Activated CD4-positive, alpha-beta T cell treated with anti-CD3 and anti-CD28 coated beads, Interleukin-2, amount 10 ng/mL, durations not matched to agents 24 days and 14 days (primary cell): ENCODE measurements at regions of chr13 and their contacts with region 1.

Region 1: GRCh38 chr13:48186722-48187121 is 46.3 kb upstream of the ITM2B start:
- DNase-seq: no peak
- H3K4me3 Mint-ChIP-seq: no peak overlapping the region
- H3K27ac Mint-ChIP-seq: no peak overlapping the region
- H3K4me1 Mint-ChIP-seq: peaks cover 27% of the 10 kb centered on the region
- H3K27me3 Mint-ChIP-seq: peaks cover 4% of the 10 kb centered on the region

Region 2: DNA sequence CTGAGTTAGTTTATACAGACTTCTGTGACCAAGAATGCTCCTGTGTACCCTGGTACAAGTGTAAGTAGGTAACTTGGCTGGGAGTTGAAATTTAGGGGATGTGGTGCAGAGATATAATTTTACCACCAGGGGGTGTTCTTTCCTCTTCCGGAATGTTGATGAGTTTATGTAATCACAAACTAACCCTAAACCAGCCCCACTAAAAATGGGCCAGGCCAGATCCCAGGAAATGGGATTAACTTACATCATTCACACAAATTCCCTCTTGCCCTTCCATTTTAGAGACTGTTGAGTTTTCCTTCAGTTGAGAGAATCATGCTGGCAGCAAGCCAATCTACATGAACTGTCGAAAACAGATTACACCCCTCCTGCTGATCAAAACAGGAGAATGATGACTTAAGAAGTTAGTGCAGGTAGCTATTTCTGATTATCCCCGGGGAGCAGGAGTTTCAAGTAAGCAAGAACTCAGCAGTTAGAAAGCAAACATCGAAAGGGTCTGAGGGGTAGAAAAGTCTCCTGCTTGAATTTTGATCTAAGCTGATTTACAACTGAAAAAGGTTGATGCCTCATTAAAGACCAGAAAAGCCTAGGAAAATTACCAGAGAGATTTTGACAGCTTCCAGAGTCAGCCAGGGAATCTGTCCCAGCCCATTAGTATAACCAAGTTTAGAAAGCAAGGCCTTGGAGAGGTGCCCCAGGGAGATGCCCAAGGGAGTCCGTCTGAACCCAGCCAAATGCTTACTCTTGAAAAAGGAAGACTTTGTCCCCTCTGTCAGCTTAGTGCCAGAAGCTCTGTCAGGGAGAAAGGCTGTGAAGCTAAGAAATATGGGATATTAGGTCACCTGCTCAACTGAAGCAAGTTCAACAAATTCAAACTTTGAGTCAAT is 59.5 kb before region 1 on chr13:
- intact Hi-C with region 1: loop called (anchors 2 kb)
- DNase-seq: peak; percentile 81
- H3K4me3 Mint-ChIP-seq: no peak overlapping the region
- H3K27ac Mint-ChIP-seq: no peak overlapping the region
- H3K4me1 Mint-ChIP-seq: peaks cover 18% of the 10 kb centered on the region
- H3K27me3 Mint-ChIP-seq: peaks cover 13% of the 10 kb centered on the region

Region 3: GRCh38 chr13:48155848-48156247 is 30.9 kb before region 1 on chr13:
- intact Hi-C with region 1: loop called (anchors 1 kb)
- DNase-seq: peak; percentile 80
- H3K4me3 Mint-ChIP-seq: peak overlapping the region; percentile 44
- H3K27ac Mint-ChIP-seq: peak overlapping the region; percentile 87
- H3K4me1 Mint-ChIP-seq: peaks cover 59% of the 10 kb centered on the region
- H3K27me3 Mint-ChIP-seq: no peaks in the 10 kb centered on the region

Region 4: DNA sequence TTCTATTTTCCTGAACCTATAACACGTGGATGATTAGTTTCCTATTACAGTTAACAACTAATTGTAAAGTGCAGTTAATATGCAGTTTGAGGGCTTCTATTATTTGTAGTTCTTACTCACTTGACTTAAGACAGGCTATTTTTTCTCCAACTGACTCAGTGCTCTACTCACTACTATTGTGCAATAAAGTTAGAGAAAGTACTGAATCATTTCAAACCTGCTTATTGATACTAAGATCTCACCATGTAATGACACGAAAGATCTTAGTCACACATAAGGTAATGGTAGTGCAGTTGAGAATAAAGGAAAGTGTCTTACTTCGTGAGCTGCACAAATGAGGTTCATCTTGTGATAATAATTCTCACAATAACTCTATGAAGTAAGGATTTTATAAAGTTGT is 23.5 kb after region 1 on chr13:
- intact Hi-C with region 1: loop called (anchors 1 kb)
- DNase-seq: no peak
- H3K4me3 Mint-ChIP-seq: no peak overlapping the region
- H3K27ac Mint-ChIP-seq: no peak overlapping the region
- H3K4me1 Mint-ChIP-seq: peaks cover 7% of the 10 kb centered on the region
- H3K27me3 Mint-ChIP-seq: peaks cover 34% of the 10 kb centered on the region

Region 5: DNA sequence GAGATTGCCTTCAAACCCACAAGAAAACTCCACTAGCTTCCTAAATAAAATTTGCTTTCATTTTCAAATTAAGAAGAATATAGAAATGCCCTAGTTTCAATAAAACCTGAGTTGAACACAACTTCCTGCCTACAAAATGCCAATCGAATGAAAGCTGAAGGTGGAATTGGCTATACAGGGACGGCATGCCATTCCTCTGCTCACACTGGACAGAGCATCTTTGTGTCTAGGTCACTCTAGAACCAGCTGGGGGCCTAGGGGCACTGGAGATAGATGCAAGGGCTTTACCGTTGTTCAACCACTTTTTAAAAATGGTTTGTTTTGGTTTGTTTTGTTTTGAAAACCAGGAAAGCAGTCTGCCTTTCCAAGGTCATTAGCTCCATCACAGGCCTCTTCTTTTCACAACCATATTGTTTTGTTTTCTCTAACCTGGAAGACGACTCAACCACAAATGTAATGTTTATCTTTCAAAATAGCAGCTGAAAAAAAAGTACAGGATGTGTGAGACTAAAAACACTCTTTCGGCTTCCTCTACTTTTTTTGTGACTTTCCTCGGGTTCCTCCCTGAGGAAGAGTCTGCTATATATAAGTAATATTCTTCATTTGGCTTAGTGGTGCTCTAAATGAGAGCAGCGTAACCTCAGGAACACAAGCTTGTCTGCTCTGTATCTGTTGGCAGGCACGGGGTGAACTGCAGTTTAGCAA is 34.4 kb after region 1 on chr13:
- intact Hi-C with region 1: loop called (anchors 2 kb)
- DNase-seq: peak; percentile 73
- H3K4me3 Mint-ChIP-seq: peak overlapping the region; percentile 69
- H3K27ac Mint-ChIP-seq: peak overlapping the region; percentile 78
- H3K4me1 Mint-ChIP-seq: peaks cover 35% of the 10 kb centered on the region
- H3K27me3 Mint-ChIP-seq: peaks cover 15% of the 10 kb centered on the region